ENCODE measurements at regions of chr3 and their contacts with region 1.

Region 1: GRCh38 chr3:48222616-48223513 is at the start of gene CAMP:
- DNase-seq: peak; percentile 92
- H3K4me3 ChIP-seq: peak within 1 kb of the TSS; percentile 41
- H3K27ac ChIP-seq: peak within 1 kb of the TSS; percentile 97
- H3K4me1 ChIP-seq: peaks cover 75% of the 10 kb centered on the region
- CTCF ChIP-seq: no peak
- total RNA-seq, gene CAMP: 18.2 and 34.6 TPM in 2 replicates

Region 2: DNA sequence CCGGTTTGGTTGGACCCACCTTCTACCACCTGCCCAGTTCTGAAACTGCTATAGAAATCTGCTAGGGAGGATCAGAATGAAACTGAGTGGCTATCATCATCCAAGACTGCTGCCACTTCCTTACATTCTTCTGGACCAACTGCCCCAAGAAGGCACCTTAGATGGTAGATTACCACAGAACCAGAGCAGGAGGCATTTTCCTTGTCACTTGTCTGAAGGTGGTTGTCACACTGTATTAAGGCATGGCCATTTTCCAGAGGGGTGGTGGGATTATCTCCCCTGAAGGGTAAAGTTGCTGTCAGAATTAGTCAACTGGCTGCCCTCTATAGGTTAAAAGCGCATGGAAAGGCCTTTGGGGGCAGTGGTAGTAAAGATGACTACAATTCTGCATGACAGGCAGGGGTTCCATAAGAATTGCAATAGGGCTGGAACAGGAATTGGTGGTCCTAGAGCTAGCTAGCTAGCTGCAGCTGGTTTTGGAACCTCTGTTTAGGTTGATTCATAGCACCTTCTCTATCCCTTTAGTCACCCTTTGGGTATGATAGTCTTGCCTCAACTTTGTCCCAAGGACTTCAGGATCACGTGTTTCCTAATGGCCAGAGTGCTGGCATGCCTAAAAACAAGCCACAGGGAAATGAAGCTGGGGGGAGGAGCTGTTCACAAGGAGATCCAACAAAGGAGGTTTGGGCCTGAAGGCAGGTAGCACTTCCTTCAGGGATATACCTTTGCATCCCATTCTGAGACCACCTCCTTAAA is 639.4 kb before region 1 on chr3:
- CTCF ChIA-PET with region 1: no interaction called
- POLR2A ChIA-PET with region 1: no interaction called
- intact Hi-C with region 1: no loop called
- DNase-seq: no peak
- H3K4me3 ChIP-seq: no peak overlapping the region
- H3K27ac ChIP-seq: no peak overlapping the region
- H3K4me1 ChIP-seq: no peaks in the 10 kb centered on the region
- CTCF ChIP-seq: no peak

Region 3: DNA sequence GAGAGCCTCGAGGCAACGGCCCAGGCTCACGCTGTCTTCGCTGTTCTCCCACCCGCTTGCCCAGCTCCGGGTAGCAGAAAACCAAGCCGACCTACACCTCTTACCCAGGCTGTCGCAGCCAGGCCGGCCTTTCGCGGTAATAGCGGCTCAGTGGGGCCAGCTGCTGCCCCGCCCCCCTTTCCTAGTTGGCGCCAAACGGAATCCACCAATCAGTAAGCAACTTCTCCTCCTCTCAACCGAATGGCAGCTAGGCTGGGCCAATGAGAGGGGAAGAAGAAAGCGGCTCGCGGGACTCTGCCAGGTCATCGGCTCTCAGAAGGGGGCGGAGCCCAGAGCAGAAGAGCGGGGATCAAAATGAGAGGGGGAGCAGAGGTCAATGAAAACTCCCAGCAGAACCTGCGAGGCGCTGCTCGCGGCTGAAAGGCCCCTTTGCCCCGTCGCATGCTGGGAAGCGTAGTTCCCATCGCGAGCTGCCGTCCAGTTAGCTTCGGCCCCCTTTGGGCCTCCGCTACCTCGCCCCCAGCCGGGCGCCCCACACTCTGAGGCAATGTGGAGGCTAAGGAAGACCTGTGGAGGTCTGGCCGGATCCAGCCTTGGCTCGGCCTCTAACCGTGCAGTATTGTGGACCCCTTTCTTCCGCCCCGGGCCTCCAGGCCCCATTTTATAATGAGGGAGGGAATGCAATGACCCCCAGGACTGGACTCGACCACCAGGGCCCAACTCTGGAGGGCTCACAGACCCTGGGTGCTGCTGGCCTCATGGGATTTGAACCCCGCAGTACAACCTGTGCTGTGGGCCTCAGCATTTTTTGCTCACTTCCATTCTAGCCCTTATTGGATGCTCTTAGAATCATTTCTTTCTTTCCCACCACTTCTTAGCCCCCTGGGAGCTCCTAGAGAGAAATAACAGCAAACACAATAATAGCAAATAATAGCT is 34.3 kb before region 1 on chr3 and contains the start of gene CDC25A:
- CTCF ChIA-PET with region 1: interaction called, 3 read pairs
- POLR2A ChIA-PET with region 1: interaction called, 15 read pairs
- intact Hi-C with region 1: loop called (anchors 1 kb)
- DNase-seq: peak; percentile 100
- H3K4me3 ChIP-seq: peak within 1 kb of the TSS; percentile 95
- H3K27ac ChIP-seq: peak within 1 kb of the TSS; percentile 87
- H3K4me1 ChIP-seq: peaks cover 34% of the 10 kb centered on the region
- CTCF ChIP-seq: no peak
- total RNA-seq, gene CDC25A: 74.5 and 83.4 TPM in 2 replicates

Region 4: DNA sequence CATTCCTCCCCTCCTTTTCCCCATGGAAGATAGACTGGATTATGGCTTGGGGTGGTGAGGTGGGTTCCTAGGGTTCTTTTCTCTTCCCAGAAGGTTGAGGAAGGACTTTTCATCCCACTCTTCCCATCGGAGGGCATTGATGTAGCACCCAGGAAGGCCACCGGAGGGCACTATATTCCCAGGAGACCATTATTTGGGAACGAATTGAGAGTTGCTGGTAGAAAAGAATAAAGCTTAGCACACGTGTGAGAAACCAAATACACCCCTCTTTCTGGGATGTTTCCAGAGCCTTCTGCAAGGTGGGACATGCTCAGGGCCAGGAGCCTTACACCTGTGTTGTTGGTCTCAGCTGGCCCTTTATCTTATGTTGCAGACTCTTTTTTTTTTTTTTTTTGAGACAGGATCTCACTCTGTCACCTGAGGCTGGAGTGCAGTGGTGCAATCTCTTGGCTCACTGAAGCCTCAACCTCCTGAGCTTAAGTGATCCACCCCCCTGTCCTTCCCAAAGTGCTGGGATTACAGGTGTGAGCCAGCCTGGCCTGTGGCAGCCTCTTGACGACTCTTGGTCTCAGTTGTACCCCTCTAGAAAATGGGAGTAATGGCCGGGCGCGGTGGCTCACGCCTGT is 28.3 kb before region 1 on chr3:
- CTCF ChIA-PET with region 1: interaction called, 3 read pairs
- POLR2A ChIA-PET with region 1: interaction called, 15 read pairs
- intact Hi-C with region 1: loop called (anchors 1 kb)
- DNase-seq: peak; percentile 70
- H3K4me3 ChIP-seq: no peak overlapping the region
- H3K27ac ChIP-seq: no peak overlapping the region
- H3K4me1 ChIP-seq: peaks cover 15% of the 10 kb centered on the region
- CTCF ChIP-seq: peak; percentile 99

Region 5: GRCh38 chr3:48240711-48241491 is 18.0 kb after region 1 on chr3 and contains the start of gene ZNF589:
- CTCF ChIA-PET with region 1: no interaction called
- POLR2A ChIA-PET with region 1: interaction called, 9 read pairs
- intact Hi-C with region 1: loop called (anchors 1 kb)
- DNase-seq: peak; percentile 97
- H3K4me3 ChIP-seq: peak within 1 kb of the TSS; percentile 88
- H3K27ac ChIP-seq: peak within 1 kb of the TSS; percentile 80
- H3K4me1 ChIP-seq: peaks cover 36% of the 10 kb centered on the region
- CTCF ChIP-seq: peak; percentile 66
- total RNA-seq, gene ZNF589: 61.4 and 62.4 TPM in 2 replicates

Region 6: GRCh38 chr3:48273594-48274211 is 50.8 kb after region 1 on chr3:
- CTCF ChIA-PET with region 1: no interaction called
- POLR2A ChIA-PET with region 1: no interaction called
- intact Hi-C with region 1: no loop called
- DNase-seq: peak; percentile 76
- H3K4me3 ChIP-seq: no peak overlapping the region
- H3K27ac ChIP-seq: no peak overlapping the region
- H3K4me1 ChIP-seq: no peaks in the 10 kb centered on the region
- CTCF ChIP-seq: peak; percentile 88

Measured in OCI-LY7 (cell line).